ENCODE measurements at regions of chr6 and their contacts with region 1.

Region 1: DNA sequence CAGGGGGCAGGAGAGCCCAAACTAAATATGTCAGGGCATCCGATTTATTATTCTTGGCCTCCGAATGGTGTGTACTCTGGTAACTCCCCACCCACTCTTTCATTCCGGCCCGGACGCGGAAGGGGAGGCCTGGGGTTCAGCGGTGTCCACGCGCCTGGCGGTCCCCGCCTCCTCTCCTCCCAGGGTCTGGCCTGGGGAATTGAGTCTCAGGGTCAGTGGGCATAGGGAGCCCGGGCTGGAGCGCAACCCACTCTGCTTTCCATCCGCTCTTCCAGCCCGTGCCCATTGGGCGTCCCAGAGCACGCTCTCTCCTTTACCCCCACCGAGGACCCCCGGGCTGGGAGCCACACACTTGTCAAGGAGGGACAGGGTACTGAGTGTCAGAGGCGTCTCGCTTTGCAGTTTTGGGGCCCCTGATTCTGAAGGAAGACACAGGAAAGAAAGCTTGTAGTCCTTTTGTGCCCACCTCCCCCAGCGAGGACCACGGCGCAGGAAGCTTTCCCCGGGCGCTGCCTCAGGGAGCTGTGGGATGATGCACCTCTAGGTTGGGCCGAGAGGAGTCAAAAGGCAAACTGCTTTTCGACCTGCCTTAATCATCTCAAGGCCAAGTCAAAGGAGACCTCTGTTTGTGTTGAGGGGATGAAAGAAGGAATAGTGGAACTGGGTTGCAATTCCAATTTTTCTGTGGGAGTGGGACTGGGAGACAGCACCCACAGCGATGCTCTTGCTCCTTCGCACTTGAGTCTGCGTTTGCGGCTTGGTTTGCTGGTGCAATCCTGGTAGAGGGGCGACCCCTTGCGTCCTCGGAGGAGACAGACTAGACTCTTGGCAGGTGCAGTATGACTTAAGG is 2.5 kb downstream of the RSPO3 start:
- DNase-seq: peak; percentile 88
- H3K4me3 ChIP-seq: peak overlapping the region; percentile 31 to 73 (median 59)
- H3K27ac ChIP-seq: no peak overlapping the region
- H3K4me1 ChIP-seq: peaks cover 19% of the 10 kb centered on the region
- H3K27me3 ChIP-seq: no peaks in the 10 kb centered on the region
- CTCF ChIP-seq: peak; percentile 83 to 89
- POLR2A ChIP-seq: no peak

Region 2: GRCh38 chr6:126033696-126034095 is 1087.3 kb before region 1 on chr6:
- CTCF ChIA-PET with region 1: interaction called, 14 read pairs
- POLR2A ChIA-PET with region 1: no interaction called
- dilution Hi-C with region 1: no loop called
- intact Hi-C with region 1: loop called (anchors 1 kb)
- DNase-seq: peak; percentile 78
- H3K4me3 ChIP-seq: no peak overlapping the region
- H3K27ac ChIP-seq: no peak overlapping the region
- H3K4me1 ChIP-seq: no peaks in the 10 kb centered on the region
- H3K27me3 ChIP-seq: no peaks in the 10 kb centered on the region
- CTCF ChIP-seq: peak; percentile 56 to 65
- POLR2A ChIP-seq: no peak

Region 3: DNA sequence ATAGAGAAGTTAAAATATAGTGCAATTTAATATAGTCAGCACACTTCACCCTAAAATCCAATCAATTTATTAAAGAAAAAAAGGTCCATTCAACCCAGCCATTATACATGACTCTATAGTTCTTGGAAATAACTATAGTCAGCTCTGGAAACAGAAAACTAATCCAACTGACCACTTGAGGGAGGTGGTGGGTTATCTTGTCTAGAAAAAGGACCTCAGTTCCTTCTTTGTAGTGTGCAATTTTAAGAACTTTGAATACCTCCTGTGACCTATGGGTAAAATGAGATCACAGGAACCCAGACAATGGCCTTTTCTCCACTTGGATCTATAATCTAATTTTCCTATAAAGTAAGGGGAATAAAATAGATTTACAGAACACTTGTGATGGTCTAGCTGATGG is 944.7 kb before region 1 on chr6:
- CTCF ChIA-PET with region 1: interaction called, 11 read pairs
- POLR2A ChIA-PET with region 1: no interaction called
- dilution Hi-C with region 1: no loop called
- intact Hi-C with region 1: loop called (anchors 1 kb)
- DNase-seq: peak; percentile 51
- H3K4me3 ChIP-seq: no peak overlapping the region
- H3K27ac ChIP-seq: no peak overlapping the region
- H3K4me1 ChIP-seq: no peaks in the 10 kb centered on the region
- H3K27me3 ChIP-seq: no peaks in the 10 kb centered on the region
- CTCF ChIP-seq: peak; percentile 17 to 42
- POLR2A ChIP-seq: no peak

Region 4: DNA sequence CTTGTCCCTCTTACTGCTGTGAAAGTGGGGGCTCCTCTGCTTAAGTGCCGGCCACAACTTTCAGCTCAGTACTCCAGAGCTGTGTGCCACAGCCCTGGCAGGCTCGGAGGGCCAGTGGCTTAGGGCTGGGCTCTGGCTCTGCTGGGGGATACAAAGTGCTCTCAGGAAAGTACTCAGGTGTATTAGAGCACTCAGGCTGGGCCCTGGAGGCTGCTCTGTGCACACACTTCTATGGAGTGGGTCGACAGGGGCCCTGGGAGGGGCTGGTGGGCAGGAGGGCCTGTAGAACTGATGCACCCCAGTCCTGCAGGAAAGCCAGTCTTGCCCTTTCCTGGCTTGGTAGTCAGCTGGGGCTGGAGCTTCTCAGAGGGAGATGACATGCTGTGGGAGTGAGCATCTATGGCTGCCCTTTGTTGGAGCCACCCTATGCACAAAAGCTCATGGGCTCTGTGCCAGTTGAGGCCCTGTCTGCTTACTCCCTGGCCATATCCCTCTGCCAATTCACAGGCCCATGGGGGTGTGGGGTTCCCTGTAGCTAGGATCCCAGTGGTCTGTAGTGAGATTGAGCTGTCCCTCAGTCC is 759.1 kb before region 1 on chr6:
- CTCF ChIA-PET with region 1: interaction called, 14 read pairs
- POLR2A ChIA-PET with region 1: no interaction called
- dilution Hi-C with region 1: no loop called
- intact Hi-C with region 1: loop called (anchors 1 kb)
- DNase-seq: no peak
- H3K4me3 ChIP-seq: no peak overlapping the region
- H3K27ac ChIP-seq: no peak overlapping the region
- H3K4me1 ChIP-seq: peaks cover 5% of the 10 kb centered on the region
- H3K27me3 ChIP-seq: no peaks in the 10 kb centered on the region
- CTCF ChIP-seq: no peak
- POLR2A ChIP-seq: no peak

Region 5: DNA sequence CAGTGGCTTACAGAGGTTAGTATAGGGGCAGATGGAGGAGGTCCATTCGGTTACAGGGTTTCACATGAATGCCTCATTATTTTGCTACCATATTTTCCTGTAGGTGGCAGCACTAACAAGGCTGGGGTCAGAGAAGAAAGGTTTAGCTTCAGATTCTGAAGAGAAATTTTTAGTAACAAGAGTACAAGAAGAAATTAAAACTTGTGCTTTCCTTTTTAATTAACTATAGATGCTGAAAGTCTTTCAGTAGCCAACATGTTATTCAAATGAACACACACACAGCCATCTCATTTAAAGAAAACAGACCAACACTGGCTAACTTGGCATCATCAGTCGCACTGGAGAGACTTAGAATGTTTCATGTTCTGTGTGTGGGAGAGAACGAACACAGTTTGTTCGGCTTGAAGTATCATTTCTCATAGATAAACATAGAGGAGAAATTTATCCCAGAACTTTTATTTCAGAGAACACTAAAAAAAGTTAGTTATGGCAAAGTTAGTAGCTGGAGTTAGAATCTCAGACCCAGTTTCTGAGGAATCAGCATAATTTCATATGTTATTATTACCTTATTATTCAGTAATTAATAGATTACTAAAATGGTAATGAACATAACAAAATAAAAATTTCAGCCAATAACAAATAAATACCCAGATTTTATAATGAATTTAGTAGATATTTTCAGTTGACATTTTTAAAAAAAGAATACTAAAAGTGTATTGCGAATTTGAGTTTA is 316.5 kb before region 1 on chr6:
- CTCF ChIA-PET with region 1: interaction called, 20 read pairs
- POLR2A ChIA-PET with region 1: no interaction called
- dilution Hi-C with region 1: no loop called
- intact Hi-C with region 1: loop called (anchors 1 kb)
- DNase-seq: peak; percentile 77
- H3K4me3 ChIP-seq: no peak overlapping the region
- H3K27ac ChIP-seq: no peak overlapping the region
- H3K4me1 ChIP-seq: peaks cover 9% of the 10 kb centered on the region
- H3K27me3 ChIP-seq: no peaks in the 10 kb centered on the region
- CTCF ChIP-seq: peak; percentile 63 to 66
- POLR2A ChIP-seq: no peak

Region 6: GRCh38 chr6:126873351-126873750 is 247.7 kb before region 1 on chr6:
- CTCF ChIA-PET with region 1: no interaction called
- POLR2A ChIA-PET with region 1: no interaction called
- dilution Hi-C with region 1: no loop called
- intact Hi-C with region 1: no loop called
- DNase-seq: peak; percentile 47
- H3K4me3 ChIP-seq: no peak overlapping the region
- H3K27ac ChIP-seq: no peak overlapping the region
- H3K4me1 ChIP-seq: peaks cover 14% of the 10 kb centered on the region
- H3K27me3 ChIP-seq: no peaks in the 10 kb centered on the region
- CTCF ChIP-seq: no peak
- POLR2A ChIP-seq: no peak

Region 7: GRCh38 chr6:127051571-127052260 is 69.3 kb before region 1 on chr6:
- CTCF ChIA-PET with region 1: no interaction called
- POLR2A ChIA-PET with region 1: no interaction called
- dilution Hi-C with region 1: no loop called
- intact Hi-C with region 1: no loop called
- DNase-seq: no peak
- H3K4me3 ChIP-seq: no peak overlapping the region
- H3K27ac ChIP-seq: no peak overlapping the region
- H3K4me1 ChIP-seq: peaks cover 24% of the 10 kb centered on the region
- H3K27me3 ChIP-seq: no peaks in the 10 kb centered on the region
- CTCF ChIP-seq: no peak
- POLR2A ChIP-seq: no peak

Region 8: DNA sequence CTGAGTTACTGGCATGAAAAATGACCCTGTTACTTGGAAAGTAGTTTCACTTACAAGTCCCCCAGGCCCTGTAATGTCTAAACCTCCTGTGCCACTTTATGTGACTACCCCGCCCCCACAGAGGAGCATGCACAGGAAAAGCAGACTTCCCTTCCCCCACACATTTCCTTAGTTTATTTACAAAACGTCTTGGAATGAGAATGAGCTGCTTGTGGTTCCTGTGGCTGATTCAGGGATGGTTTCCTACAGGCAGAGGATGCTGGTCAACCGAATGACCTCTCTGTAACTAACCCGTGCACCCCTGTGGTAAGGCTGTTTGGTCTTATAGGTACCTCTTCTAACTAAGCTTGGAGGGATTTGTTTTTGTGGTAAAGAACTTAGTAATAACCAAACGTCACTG is 25.9 kb after region 1 on chr6:
- CTCF ChIA-PET with region 1: interaction called, 3 read pairs
- POLR2A ChIA-PET with region 1: no interaction called
- dilution Hi-C with region 1: no loop called
- intact Hi-C with region 1: loop called (anchors 1 kb)
- DNase-seq: peak; percentile 90
- H3K4me3 ChIP-seq: peak overlapping the region in 1 of 3 experiments; percentile 15
- H3K27ac ChIP-seq: peak overlapping the region; percentile 46
- H3K4me1 ChIP-seq: peaks cover 21% of the 10 kb centered on the region
- H3K27me3 ChIP-seq: no peaks in the 10 kb centered on the region
- CTCF ChIP-seq: no peak
- POLR2A ChIP-seq: peak; percentile 37

Region 9: GRCh38 chr6:127539272-127539671 is 418.3 kb after region 1 on chr6:
- CTCF ChIA-PET with region 1: no interaction called
- POLR2A ChIA-PET with region 1: no interaction called
- dilution Hi-C with region 1: no loop called
- intact Hi-C with region 1: loop called (anchors 5 kb)
- DNase-seq: peak; percentile 26
- H3K4me3 ChIP-seq: no peak overlapping the region
- H3K27ac ChIP-seq: no peak overlapping the region
- H3K4me1 ChIP-seq: no peaks in the 10 kb centered on the region
- H3K27me3 ChIP-seq: peaks cover 12 to 17% of the 10 kb centered on the region in 2 experiments
- CTCF ChIP-seq: peak in 1 of 2 donors; percentile 3
- POLR2A ChIP-seq: no peak